Activated T-helper 2 cell treated with anti-CD3 and anti-CD28 coated beads, Interferon-gamma antibody, Interleukin-2, Interleukin-4, amounts not matched to agents 10 μg/mL and 5 μg/mL and 100 μg/mL, durations not matched to agents 14 hours and 24 hours and 36 hours (primary cell): ENCODE measurements at regions of chr1 and their contacts with region 1.

Region 1: GRCh38 chr1:113759333-113760101 is at the start of gene PHTF1:
- DNase-seq: peak; percentile 54
- H3K4me3 Mint-ChIP-seq: peak within 1 kb of the TSS; percentile 95
- H3K27ac Mint-ChIP-seq: peak within 1 kb of the TSS; percentile 95
- H3K4me1 Mint-ChIP-seq: peaks cover 25% of the 10 kb centered on the region
- H3K27me3 Mint-ChIP-seq: no peaks in the 10 kb centered on the region
- total RNA-seq, gene PHTF1: 22.0 and 22.5 TPM in 2 replicates

Region 2: GRCh38 chr1:113140588-113141446 is 618.7 kb before region 1 on chr1:
- intact Hi-C with region 1: loop called (anchors 2 kb)
- DNase-seq: peak; percentile 21
- H3K4me3 Mint-ChIP-seq: no peak overlapping the region
- H3K27ac Mint-ChIP-seq: no peak overlapping the region
- H3K4me1 Mint-ChIP-seq: peaks cover 15% of the 10 kb centered on the region
- H3K27me3 Mint-ChIP-seq: no peaks in the 10 kb centered on the region

Region 3: DNA sequence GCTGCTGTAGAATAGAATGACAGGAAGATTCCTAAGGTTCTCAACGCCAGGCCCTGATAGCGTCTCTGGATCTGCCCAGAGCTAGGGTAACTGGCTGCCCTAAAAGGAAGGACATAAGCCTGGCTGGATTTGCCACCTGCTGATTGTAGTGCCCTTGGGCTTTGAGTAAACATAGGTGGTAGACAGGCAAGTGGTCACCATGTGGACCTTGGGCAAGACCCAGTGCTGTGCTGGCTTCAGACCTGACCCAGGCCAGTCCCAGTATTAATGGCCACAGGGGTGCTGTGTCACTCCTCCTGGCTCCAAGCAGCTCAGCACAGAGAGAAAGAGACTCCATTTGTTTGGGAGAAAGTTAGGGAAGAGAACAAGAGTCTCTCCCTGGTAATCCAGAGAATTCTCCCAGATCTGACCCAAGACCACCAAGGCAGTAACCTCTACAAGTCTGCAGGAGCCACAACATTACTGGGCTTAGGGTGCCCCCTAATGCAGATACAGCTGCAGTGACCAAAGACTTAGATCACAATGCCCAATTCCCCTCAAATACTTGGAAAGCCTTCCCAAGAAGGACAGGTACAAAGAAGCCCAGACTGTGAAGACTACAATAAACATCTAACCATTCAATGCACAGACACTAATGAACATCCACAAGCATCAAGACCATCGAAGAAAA is 44.8 kb before region 1 on chr1:
- intact Hi-C with region 1: no loop called
- DNase-seq: no peak
- H3K4me3 Mint-ChIP-seq: no peak overlapping the region
- H3K27ac Mint-ChIP-seq: no peak overlapping the region
- H3K4me1 Mint-ChIP-seq: peaks cover 7% of the 10 kb centered on the region
- H3K27me3 Mint-ChIP-seq: no peaks in the 10 kb centered on the region

Region 4: DNA sequence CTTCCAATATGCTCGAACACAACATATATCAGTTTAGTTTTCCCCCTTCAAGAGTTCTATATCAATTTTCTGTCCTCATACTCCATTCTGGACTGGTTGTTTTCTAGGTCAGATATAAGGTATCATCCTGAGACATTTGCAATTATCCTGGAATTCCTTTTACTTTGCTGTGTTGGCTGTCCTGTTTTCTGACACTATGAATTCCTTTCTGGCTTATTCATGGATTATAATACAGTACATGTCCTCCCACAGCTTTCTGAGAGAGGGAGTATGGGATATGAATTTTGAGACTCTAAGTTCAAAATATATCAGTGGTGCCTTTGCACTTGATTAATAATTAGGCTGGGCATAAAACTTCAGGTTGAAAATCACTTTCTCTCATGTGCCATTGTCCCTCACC is 12.1 kb before region 1 on chr1:
- intact Hi-C with region 1: no loop called
- DNase-seq: no peak
- H3K4me3 Mint-ChIP-seq: no peak overlapping the region
- H3K27ac Mint-ChIP-seq: no peak overlapping the region
- H3K4me1 Mint-ChIP-seq: peaks cover 17% of the 10 kb centered on the region
- H3K27me3 Mint-ChIP-seq: no peaks in the 10 kb centered on the region

Region 5: GRCh38 chr1:113783254-113784099 is 24.0 kb after region 1 on chr1:
- intact Hi-C with region 1: loop called (anchors 2 kb)
- DNase-seq: peak; percentile 45
- H3K4me3 Mint-ChIP-seq: peak overlapping the region; percentile 68
- H3K27ac Mint-ChIP-seq: peak overlapping the region; percentile 94
- H3K4me1 Mint-ChIP-seq: peaks cover 34% of the 10 kb centered on the region
- H3K27me3 Mint-ChIP-seq: no peaks in the 10 kb centered on the region

Region 6: DNA sequence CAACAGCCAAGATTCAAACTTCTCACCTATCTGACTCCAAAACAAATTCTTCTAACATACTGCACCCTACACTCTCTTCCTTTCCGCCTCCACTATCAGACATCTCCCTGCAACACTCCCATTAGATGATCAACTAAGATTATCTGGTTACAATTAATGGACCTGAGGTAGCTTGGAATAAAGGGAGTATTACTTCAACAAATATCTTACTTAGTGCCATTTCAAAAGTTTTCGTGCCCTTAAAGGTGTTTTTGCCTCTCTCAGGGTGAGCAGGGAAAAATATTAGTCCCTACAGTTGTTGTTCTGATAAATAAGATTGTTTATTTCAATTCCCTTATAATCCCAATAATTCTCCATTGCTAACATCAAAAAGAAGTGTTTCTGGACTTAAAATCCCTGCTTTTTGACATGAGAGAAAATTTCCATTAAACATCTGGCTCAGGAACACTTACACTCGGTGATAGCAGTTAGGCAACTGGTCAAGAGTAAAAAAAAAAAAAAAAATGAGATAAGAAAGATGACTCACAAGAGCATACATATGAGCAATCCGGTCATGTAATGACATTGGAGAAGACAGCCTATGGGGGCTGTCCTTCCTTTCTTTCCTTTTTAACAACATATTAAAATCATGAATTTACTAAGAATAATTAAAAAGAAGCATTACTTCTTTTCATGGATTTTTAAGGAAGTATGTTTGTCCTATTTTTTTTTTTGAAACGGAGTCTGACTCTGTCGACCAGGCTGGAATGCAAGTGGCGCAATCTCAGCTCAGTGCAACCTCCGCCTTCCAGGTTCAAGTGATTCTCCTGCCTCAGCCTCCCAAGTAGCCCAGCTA is 45.1 kb after region 1 on chr1:
- intact Hi-C with region 1: loop called (anchors 5 kb)
- DNase-seq: no peak
- H3K4me3 Mint-ChIP-seq: no peak overlapping the region
- H3K27ac Mint-ChIP-seq: peak overlapping the region; percentile 40
- H3K4me1 Mint-ChIP-seq: peaks cover 58% of the 10 kb centered on the region
- H3K27me3 Mint-ChIP-seq: no peaks in the 10 kb centered on the region

Region 7: DNA sequence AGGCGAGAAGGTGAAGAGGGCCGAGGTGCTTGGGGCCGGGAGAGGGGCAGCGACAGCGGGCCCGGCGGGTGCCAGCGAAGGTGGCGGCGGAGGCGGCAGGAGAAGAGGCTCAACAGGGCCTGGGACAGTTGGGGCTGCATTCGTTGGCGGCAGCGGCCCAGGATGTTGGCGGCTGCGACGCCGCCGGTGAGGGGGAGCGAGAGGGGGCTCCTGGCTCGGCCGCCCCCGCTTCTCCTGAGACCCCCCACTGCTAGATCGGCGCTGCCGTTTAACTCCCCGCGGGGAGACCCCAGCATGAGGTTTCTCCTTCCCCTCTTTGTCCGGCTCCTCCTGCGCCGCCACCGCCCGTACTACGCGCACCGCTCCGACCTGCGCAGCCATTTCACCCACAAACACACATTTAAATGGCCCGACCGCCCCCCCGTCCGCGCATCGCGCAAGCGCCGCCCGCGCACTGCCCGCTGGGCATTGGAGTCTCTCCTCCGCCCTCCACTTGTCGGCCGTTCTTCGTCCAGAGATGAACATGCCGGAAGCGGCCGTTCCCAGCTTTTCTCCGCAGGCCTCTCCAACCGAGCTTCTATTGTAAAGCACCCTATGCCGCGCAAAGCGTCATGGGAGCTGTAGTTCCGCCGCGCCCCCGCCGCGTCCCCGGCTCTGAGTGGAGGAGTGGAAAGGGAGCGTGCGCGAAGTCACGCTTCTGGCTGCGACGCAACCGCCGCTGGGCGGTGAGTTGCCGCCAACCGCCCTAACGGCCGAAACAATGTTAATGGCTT is 52.6 kb after region 1 on chr1 and contains the start of gene RSBN1:
- intact Hi-C with region 1: loop called (anchors 2 kb)
- DNase-seq: peak; percentile 99
- H3K4me3 Mint-ChIP-seq: peak within 1 kb of the TSS; percentile 97
- H3K27ac Mint-ChIP-seq: peak within 1 kb of the TSS; percentile 95
- H3K4me1 Mint-ChIP-seq: peaks cover 27% of the 10 kb centered on the region
- H3K27me3 Mint-ChIP-seq: no peaks in the 10 kb centered on the region
- total RNA-seq, gene RSBN1: 21.5 and 23.4 TPM in 2 replicates